WTC11 (cell line): ENCODE measurements at regions of chr3 and their contacts with region 1.

Region 1: GRCh38 chr3:19363071-19363470 is 214.8 kb downstream of the KCNH8 start:
- DNase-seq: no peak
- ATAC-seq: no peak
- H3K4me3 Mint-ChIP-seq: no peak overlapping the region
- H3K27ac Mint-ChIP-seq: no peak overlapping the region
- H3K4me1 Mint-ChIP-seq: peaks cover 6% of the 10 kb centered on the region; the same call in 1 of the 2 replicates
- H3K27me3 Mint-ChIP-seq: no peaks in the 10 kb centered on the region
- CTCF ChIP-seq: no peak

Region 2: GRCh38 chr3:19183584-19183983 is 179.5 kb before region 1 on chr3:
- CTCF ChIA-PET with region 1: no interaction called
- POLR2A ChIA-PET with region 1: no interaction called
- DNase-seq: no peak
- ATAC-seq: no peak
- H3K4me3 Mint-ChIP-seq: no peak overlapping the region
- H3K27ac Mint-ChIP-seq: no peak overlapping the region
- H3K4me1 Mint-ChIP-seq: peaks cover 10% of the 10 kb centered on the region
- H3K27me3 Mint-ChIP-seq: no peaks in the 10 kb centered on the region
- CTCF ChIP-seq: no peak

Region 3: GRCh38 chr3:19216669-19217337 is 146.3 kb before region 1 on chr3:
- CTCF ChIA-PET with region 1: no interaction called
- POLR2A ChIA-PET with region 1: no interaction called
- DNase-seq: no peak
- ATAC-seq: no peak
- H3K4me3 Mint-ChIP-seq: no peak overlapping the region
- H3K27ac Mint-ChIP-seq: no peak overlapping the region
- H3K4me1 Mint-ChIP-seq: peaks cover 11% of the 10 kb centered on the region
- H3K27me3 Mint-ChIP-seq: no peaks in the 10 kb centered on the region
- CTCF ChIP-seq: no peak

Region 4: GRCh38 chr3:19293295-19293694 is 69.8 kb before region 1 on chr3:
- CTCF ChIA-PET with region 1: no interaction called
- POLR2A ChIA-PET with region 1: no interaction called
- DNase-seq: no peak
- ATAC-seq: peak; percentile 68
- H3K4me3 Mint-ChIP-seq: no peak overlapping the region
- H3K27ac Mint-ChIP-seq: no peak overlapping the region
- H3K4me1 Mint-ChIP-seq: peaks cover 24% of the 10 kb centered on the region
- H3K27me3 Mint-ChIP-seq: no peaks in the 10 kb centered on the region
- CTCF ChIP-seq: no peak

Region 5: DNA sequence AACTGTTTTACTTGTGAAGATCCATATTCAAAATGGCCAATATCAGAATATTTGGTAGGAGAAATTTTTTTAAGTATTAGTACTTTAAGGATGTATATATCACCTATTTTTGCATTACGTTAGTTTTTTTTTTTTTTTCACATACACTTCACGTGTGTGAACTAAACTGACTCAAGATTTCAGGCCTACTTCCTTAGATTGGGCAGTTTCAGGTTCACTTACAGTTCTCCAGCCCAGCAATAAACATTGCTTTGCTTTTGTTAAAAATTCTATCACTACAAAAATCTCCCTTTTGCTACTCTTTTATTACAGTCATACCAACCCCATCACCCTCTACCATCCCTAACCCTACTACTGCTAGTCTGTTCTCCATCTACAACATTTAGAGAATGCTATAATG is 31.1 kb before region 1 on chr3:
- CTCF ChIA-PET with region 1: no interaction called
- POLR2A ChIA-PET with region 1: no interaction called
- DNase-seq: no peak
- ATAC-seq: no peak
- H3K4me3 Mint-ChIP-seq: no peak overlapping the region
- H3K27ac Mint-ChIP-seq: no peak overlapping the region
- H3K4me1 Mint-ChIP-seq: peaks cover 8% of the 10 kb centered on the region
- H3K27me3 Mint-ChIP-seq: no peaks in the 10 kb centered on the region
- CTCF ChIP-seq: no peak

Region 6: GRCh38 chr3:19399836-19400235 is 36.8 kb after region 1 on chr3:
- CTCF ChIA-PET with region 1: no interaction called
- POLR2A ChIA-PET with region 1: interaction called, 11 read pairs
- DNase-seq: no peak
- ATAC-seq: no peak; the same call in 1 of the 2 replicates
- H3K4me3 Mint-ChIP-seq: no peak overlapping the region
- H3K27ac Mint-ChIP-seq: peak overlapping the region; percentile 92
- H3K4me1 Mint-ChIP-seq: peaks cover 16% of the 10 kb centered on the region
- H3K27me3 Mint-ChIP-seq: no peaks in the 10 kb centered on the region
- CTCF ChIP-seq: no peak